CD4-positive, alpha-beta T cell (primary cell): ENCODE measurements at regions of chr5 and their contacts with region 1.

Region 1: GRCh38 chr5:126449751-126450271 is 26.6 kb downstream of the GRAMD2B start:
- DNase-seq: peak in 13 of 14 experiments; percentile 20 to 90 (median 53)
- ATAC-seq: peak; percentile 77
- H3K4me3 ChIP-seq: peak overlapping the region; percentile 57
- H3K4me3 Mint-ChIP-seq: peak overlapping the region; percentile 91
- H3K27ac ChIP-seq: peak overlapping the region; percentile 84 to 96
- H3K27ac Mint-ChIP-seq: peak overlapping the region; percentile 97
- H3K4me1 ChIP-seq: peaks cover 53% of the 10 kb centered on the region
- H3K4me1 Mint-ChIP-seq: peaks cover 71% of the 10 kb centered on the region
- H3K27me3 ChIP-seq: no peaks in the 10 kb centered on the region
- H3K27me3 Mint-ChIP-seq: no peaks in the 10 kb centered on the region
- CTCF ChIP-seq: no peak

Region 2: DNA sequence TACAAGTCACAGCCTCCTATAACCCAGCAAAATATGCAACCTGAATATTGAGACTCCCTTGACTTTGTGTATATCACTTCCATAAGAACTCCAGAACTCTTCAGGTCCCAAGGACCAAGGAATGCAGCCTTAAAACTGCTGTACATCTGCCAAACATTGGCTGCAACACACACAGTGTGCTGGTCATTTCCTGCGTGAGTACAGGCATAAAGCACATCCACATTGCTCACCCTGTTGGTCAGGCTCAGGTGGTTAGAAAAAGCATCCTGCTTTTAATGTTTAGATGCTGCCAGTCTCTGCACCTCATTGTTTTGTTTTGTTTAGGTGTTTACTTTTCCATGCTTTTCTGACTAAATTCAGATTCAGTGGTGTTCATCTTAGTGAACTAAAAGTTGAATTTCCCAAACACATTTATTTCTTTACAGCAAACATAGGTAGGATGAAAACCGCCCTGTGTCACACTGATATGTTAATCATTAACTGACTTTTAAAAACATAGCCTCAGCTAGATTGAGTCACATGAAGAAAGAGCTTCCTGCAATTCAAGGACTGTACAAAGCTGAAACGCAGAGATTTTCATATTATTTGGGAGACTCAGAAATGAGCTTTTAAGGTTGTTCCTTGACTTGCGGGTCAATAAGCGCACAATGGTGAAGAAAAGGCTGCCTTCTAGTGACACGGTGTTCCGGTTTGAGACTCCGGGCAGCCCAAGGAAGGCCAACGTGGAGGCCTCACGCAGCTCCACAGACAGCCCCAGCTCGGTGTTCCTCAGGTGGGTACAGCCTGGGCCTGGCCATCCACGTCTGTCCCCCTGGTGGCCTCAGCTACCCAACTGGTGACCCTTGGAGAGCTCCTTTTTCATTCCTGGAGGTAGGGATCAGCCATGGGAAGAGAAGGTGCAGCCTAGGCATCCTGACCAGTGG is 78.8 kb before region 1 on chr5:
- CTCF ChIA-PET with region 1: no interaction called
- POLR2A ChIA-PET with region 1: no interaction called
- intact Hi-C with region 1: loop called in 1 of 2 experiments (anchors 5 kb)
- DNase-seq: no peak
- ATAC-seq: no peak
- H3K4me3 ChIP-seq: no peak overlapping the region
- H3K4me3 Mint-ChIP-seq: no peak overlapping the region
- H3K27ac ChIP-seq: no peak overlapping the region
- H3K27ac Mint-ChIP-seq: no peak overlapping the region
- H3K4me1 ChIP-seq: peaks cover 6% of the 10 kb centered on the region
- H3K4me1 Mint-ChIP-seq: peaks cover 17% of the 10 kb centered on the region
- H3K27me3 ChIP-seq: no peaks in the 10 kb centered on the region
- H3K27me3 Mint-ChIP-seq: no peaks in the 10 kb centered on the region
- CTCF ChIP-seq: no peak

Region 3: DNA sequence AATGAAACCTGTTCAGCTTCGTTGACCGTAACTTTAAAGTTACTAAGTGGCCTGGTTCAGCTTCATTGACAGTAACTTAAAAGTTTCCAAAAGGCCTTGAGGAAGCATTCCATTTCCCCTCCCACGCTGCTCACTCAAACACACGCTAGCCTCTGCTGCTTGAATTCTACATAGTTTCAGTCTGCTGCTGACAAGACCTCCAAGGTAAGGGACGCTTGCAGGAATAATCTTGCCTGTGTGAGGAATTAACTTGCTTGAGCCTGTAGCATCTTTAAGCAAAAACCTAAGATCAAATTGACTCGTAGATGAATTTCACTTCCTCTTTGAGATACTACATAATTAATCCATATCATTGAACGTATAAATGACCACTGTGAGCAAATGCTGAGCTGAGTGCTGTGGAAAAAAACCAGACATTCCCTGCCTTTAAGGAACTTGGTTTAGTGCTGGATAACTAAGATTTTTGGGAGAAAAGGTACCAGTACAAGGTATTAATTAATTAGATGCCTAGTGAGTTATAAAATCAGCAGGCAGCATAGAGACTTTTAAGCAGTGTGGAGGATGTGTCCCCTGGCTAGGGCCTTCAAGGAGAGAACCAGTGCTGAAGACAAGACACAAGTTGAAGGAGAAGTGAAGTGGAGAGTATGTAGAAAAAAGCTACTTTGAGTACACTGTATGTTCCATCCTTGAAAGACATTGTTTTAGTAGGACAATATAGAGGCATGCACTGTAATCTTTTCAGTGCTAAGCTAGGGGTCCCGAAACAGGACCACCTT is 12.6 kb after region 1 on chr5:
- CTCF ChIA-PET with region 1: no interaction called
- POLR2A ChIA-PET with region 1: interaction called, 14 read pairs
- intact Hi-C with region 1: no loop called
- DNase-seq: no peak
- ATAC-seq: no peak
- H3K4me3 ChIP-seq: no peak overlapping the region
- H3K4me3 Mint-ChIP-seq: no peak overlapping the region
- H3K27ac ChIP-seq: no peak overlapping the region
- H3K27ac Mint-ChIP-seq: peak overlapping the region; percentile 35
- H3K4me1 ChIP-seq: no peaks in the 10 kb centered on the region
- H3K4me1 Mint-ChIP-seq: peaks cover 28% of the 10 kb centered on the region
- H3K27me3 ChIP-seq: no peaks in the 10 kb centered on the region
- H3K27me3 Mint-ChIP-seq: no peaks in the 10 kb centered on the region
- CTCF ChIP-seq: no peak